ENCODE measurements at regions of chrX and their contacts with region 1.

Region 1: DNA sequence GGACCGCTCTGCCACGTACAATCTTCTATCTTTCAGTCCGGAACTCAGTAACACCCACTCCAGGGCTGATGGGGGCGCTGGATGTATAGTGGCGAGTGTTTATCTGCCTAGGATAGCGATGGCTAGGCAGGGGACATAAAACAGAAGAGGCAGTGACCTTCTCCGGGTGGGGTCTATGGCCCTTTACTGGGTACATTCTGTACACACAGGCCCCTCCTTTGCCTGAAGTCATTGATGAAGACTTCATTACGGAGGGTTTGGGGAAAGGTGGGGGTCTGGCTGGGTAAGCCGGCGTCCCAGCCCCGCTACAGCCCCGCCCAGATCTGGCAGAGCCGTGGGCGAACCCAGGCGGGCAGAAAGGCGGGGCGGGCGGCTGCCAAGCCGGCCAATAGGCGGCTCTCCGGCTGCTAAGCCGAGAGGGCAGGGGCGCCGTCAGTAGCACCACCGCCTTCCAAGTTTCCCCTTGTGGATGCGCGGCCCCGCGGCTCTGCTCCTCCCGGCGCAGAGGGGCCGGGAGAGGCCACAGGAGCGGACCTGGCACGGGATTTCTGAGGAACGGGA is at the start of gene CHST7:
- DNase-seq: peak; percentile 53
- ATAC-seq: peak; percentile 65
- H3K4me3 Mint-ChIP-seq: peak within 1 kb of the TSS; percentile 85
- H3K27ac Mint-ChIP-seq: peak within 1 kb of the TSS; percentile 91
- H3K4me1 Mint-ChIP-seq: peaks cover 49% of the 10 kb centered on the region
- H3K27me3 Mint-ChIP-seq: no peaks in the 10 kb centered on the region
- CTCF ChIP-seq: no peak
- total RNA-seq, gene CHST7: 6.3 and 7.5 TPM in 2 replicates

Region 2: DNA sequence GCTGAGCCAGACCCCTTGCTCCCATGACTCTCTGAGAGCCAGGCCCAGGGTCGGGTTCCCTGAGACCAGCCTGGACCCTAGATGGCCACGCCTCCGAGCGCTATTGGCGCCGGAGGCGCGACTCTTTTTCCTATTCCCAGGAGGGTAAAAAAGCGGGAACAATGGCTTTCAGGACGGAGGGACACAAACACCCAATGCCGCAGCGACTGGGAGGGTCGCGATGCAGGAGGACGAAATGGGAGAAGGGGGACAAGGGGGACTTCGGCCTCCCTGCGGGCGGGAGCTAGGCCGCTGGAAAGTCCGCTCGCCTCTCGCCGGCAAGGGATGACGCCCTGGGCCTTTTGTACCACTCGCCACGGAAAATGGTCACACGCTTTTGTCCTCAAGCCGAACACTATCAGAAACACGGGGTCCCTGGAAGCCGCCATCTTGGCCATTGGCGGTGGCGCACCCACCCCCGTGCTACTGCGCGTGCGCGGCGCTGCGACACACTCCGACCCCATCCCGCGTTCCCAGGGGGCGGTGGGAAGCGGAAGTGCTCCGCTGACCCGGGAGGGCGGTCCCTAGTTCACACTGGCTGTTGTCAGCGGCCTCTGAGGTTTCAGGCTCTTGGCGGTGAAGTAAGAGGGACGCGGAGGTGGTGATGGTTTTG is 126.6 kb before region 1 on chrX:
- CTCF ChIA-PET with region 1: no interaction called
- POLR2A ChIA-PET with region 1: no interaction called
- intact Hi-C with region 1: loop called (anchors 5 kb)
- DNase-seq: peak; percentile 81
- ATAC-seq: peak; percentile 98
- H3K4me3 Mint-ChIP-seq: peak overlapping the region; percentile 85
- H3K27ac Mint-ChIP-seq: peak overlapping the region; percentile 85
- H3K4me1 Mint-ChIP-seq: peaks cover 11% of the 10 kb centered on the region
- H3K27me3 Mint-ChIP-seq: no peaks in the 10 kb centered on the region
- CTCF ChIP-seq: no peak

Region 3: GRCh38 chrX:46561824-46562657 is 11.4 kb before region 1 on chrX:
- CTCF ChIA-PET with region 1: interaction called, 15 read pairs
- POLR2A ChIA-PET with region 1: interaction called, 46 read pairs
- intact Hi-C with region 1: loop called (anchors 1 kb)
- DNase-seq: no peak
- ATAC-seq: peak; percentile 96
- H3K4me3 Mint-ChIP-seq: peak overlapping the region; percentile 39
- H3K27ac Mint-ChIP-seq: peak overlapping the region; percentile 70
- H3K4me1 Mint-ChIP-seq: peaks cover 17% of the 10 kb centered on the region
- H3K27me3 Mint-ChIP-seq: peaks cover 12% of the 10 kb centered on the region
- CTCF ChIP-seq: no peak

Region 4: DNA sequence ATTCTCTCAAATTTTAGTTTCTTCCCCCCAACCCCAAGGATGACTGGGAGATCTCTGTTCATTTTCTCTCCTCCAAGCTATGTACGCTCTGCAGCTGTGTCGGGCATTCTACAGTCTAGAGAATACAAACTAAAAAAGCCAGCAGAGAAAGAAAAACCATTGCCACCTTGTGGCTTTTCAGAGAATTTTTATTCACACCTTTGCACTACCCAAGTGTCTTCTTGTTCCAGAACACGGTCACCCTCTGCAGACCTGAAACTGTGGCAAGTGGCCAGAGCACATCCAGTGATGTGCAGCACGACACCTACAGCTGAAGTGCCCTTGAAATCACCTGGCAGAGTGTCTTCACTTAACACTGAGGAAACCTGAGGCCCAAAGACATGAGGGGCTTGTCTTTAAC is 68.7 kb after region 1 on chrX:
- CTCF ChIA-PET with region 1: interaction called, 6 read pairs
- POLR2A ChIA-PET with region 1: interaction called, 7 read pairs
- intact Hi-C with region 1: loop called (anchors 1 kb)
- DNase-seq: no peak
- ATAC-seq: peak; percentile 42
- H3K4me3 Mint-ChIP-seq: no peak overlapping the region
- H3K27ac Mint-ChIP-seq: peak overlapping the region; percentile 56
- H3K4me1 Mint-ChIP-seq: peaks cover 54% of the 10 kb centered on the region
- H3K27me3 Mint-ChIP-seq: no peaks in the 10 kb centered on the region
- CTCF ChIP-seq: no peak

Region 5: DNA sequence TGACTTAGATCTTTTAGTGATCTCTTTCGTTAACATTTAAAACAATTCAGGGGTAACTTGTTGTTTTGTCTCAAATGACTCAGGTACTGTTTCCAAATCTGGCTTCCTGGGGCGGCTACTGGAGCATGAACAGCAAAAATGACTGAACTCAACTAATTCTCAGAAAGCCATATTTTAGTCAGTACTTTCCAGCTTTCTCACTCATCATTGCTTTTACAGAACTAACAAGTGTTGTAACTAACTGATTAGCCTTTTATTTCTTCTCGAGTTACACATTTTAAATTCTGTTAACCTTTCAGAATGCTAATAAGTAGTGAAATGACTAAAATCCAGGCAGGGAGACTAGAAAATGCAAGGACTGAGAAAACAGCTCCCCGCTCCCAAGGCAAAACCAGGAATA is 394.1 kb after region 1 on chrX:
- CTCF ChIA-PET with region 1: no interaction called
- POLR2A ChIA-PET with region 1: no interaction called
- intact Hi-C with region 1: loop called (anchors 5 kb)
- DNase-seq: no peak
- ATAC-seq: peak; percentile 54
- H3K4me3 Mint-ChIP-seq: peak overlapping the region; percentile 70
- H3K27ac Mint-ChIP-seq: peak overlapping the region; percentile 93
- H3K4me1 Mint-ChIP-seq: peaks cover 82% of the 10 kb centered on the region
- H3K27me3 Mint-ChIP-seq: no peaks in the 10 kb centered on the region
- CTCF ChIP-seq: no peak